ENCODE measurements at regions of chr10 and their contacts with region 1.

Region 1: DNA sequence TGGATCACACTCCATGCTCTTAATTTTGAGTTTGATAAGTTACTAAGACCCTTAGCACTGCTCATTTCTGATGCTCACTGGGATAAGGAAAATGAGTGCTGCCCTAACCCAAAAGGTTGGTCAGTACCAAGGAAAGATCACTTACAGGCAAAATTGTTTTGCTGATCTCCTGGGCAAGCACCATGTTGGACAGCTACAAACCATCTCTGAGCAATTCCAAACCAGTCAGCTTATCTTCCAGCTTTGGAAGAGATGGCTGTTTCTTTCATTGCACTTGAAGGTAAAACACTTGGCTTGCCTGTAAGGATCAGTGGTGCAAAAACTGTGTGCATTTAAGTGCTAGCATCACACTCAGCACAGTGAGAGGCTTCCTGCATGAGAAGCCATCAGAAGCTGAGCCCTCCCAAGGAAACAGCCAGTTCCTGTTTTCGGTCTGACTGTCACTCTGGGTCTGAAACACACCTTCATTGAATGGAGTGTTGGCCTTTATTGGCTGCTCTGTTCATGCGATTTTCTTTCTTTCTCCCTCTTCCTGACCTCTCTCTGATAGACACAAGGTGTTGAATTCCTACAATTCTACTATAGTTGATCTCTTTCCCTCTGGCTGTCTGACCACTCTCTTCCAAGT is 126.4 kb upstream of the GHITM start:
- DNase-seq: no peak
- H3K4me3 ChIP-seq: no peak overlapping the region
- H3K4me3 Mint-ChIP-seq: peak overlapping the region in 5 of 8 donors; percentile 5 to 25 (median 10)
- H3K27ac ChIP-seq: no peak overlapping the region
- H3K27ac Mint-ChIP-seq: peak overlapping the region in 4 of 7 donors; percentile 52 to 84 (median 72)
- H3K4me1 ChIP-seq: peaks cover 8% of the 10 kb centered on the region
- H3K4me1 Mint-ChIP-seq: peaks cover 0 to 13% (median 8%) of the 10 kb centered on the region in 4 donors
- H3K27me3 ChIP-seq: no peaks in the 10 kb centered on the region
- H3K27me3 Mint-ChIP-seq: peaks cover 5 to 10% of the 10 kb centered on the region in 2 donors

Region 2: GRCh38 chr10:83724471-83725241 is 288.3 kb before region 1 on chr10:
- CTCF ChIA-PET with region 1: no interaction called
- POLR2A ChIA-PET with region 1: no interaction called
- intact Hi-C with region 1: no loop called
- DNase-seq: no peak
- H3K4me3 ChIP-seq: no peak overlapping the region
- H3K4me3 Mint-ChIP-seq: no peak overlapping the region
- H3K27ac ChIP-seq: no peak overlapping the region
- H3K27ac Mint-ChIP-seq: no peak overlapping the region
- H3K4me1 ChIP-seq: no peaks in the 10 kb centered on the region
- H3K4me1 Mint-ChIP-seq: no peaks in the 10 kb centered on the region
- H3K27me3 ChIP-seq: no peaks in the 10 kb centered on the region
- H3K27me3 Mint-ChIP-seq: no peaks in the 10 kb centered on the region

Region 3: DNA sequence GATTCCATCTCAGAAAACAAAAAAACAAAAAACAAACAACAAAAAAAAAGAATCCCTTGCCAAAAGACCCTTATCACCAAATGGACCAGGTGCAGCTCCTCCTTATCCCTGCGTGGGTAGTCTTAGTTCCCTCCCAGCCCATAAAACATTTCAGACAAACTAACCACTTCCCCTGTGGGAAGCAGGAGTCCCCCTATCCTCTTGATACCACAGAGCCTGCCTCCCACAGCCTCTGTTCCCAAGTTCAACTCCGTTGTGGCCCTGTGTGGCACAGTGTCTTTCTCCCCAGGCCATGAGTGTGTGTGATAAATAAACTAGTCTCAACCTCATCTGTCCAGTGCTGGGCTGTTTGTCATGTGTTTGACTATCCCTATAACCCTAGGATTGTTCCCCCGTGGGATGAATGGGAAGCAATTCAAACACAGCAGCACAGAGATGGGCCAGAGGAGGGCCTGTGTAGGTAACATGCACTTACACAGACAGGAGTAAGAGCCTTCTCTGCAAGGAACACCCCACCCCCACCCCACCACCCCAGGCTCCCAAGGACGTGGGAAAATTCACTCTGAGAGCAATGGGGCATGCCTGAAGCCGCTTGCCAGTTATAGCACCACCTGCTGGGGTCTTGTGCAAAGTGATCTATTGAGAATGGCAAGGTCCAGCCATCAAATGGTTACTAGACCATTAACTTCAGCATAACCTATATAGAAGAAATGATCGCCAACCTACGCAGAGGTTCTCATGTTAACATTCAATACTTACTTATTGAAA is 20.8 kb before region 1 on chr10:
- CTCF ChIA-PET with region 1: interaction called, 10 read pairs
- POLR2A ChIA-PET with region 1: interaction called, 3 read pairs
- intact Hi-C with region 1: no loop called
- DNase-seq: no peak
- H3K4me3 ChIP-seq: no peak overlapping the region
- H3K4me3 Mint-ChIP-seq: no peak overlapping the region
- H3K27ac ChIP-seq: no peak overlapping the region
- H3K27ac Mint-ChIP-seq: peak overlapping the region in 1 of 7 donors; percentile 15
- H3K4me1 ChIP-seq: peaks cover 12% of the 10 kb centered on the region
- H3K4me1 Mint-ChIP-seq: peaks cover 6 to 15% (median 7%) of the 10 kb centered on the region in 4 donors
- H3K27me3 ChIP-seq: peaks cover 3% of the 10 kb centered on the region
- H3K27me3 Mint-ChIP-seq: peaks cover 0 to 2% of the 10 kb centered on the region in 2 donors